CD14-positive monocyte (primary cell): ENCODE measurements at regions of chr7 and their contacts with region 1.

Region 1: DNA sequence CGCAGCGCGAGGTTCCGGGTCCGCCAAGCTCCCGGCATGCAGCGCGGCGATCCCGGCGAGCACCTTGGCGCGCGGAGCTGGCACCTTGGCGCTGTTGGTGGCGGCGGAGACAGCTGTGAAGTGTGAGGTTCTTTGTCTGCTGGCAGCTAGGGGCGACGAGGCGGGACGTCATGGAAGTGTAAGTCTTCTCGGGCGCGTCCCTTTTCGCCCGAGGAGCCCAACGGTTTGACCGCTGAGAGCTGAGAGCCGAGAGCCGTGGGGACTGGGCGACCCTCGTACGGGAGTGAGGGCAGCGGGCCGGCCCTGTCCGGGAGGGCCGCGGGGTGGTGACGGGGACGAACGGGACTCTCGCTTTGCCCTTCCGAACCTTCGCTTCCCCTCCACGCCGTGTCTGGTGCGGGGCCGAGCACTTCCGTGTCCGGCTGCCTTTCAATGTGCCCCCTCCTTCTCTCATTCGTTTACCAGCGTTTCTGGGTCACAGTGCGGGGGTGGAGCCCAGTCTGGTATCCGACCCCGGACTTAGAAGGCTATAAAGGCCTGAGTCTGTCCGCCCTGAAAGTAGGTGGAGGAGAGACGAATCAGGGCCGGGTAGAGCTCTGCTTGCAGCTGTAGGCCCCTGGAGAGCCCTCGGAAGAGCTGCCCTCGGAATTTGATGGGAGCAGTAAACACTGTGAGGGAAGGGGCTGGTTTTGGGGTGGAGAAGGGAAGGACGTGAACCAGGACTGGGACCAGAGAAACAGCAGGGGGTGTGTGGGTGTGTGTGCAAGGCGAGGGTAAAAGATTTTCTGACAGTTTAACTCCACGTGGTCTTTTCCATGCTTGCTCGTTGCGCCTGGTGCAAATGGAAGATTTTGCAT is at the start of gene CRCP:
- DNase-seq: peak; percentile 59 to 72 (median 70)
- H3K4me3 ChIP-seq: peak within 1 kb of the TSS; percentile 65 to 85 (median 80)
- H3K4me3 Mint-ChIP-seq: peak within 1 kb of the TSS; percentile 98 to 99
- H3K27ac ChIP-seq: peak within 1 kb of the TSS; percentile 92 to 96
- H3K27ac Mint-ChIP-seq: peak within 1 kb of the TSS; percentile 97 to 99 (median 98)
- H3K4me1 ChIP-seq: peaks cover 13 to 22% of the 10 kb centered on the region in 2 donors
- H3K4me1 Mint-ChIP-seq: peaks cover 35% of the 10 kb centered on the region
- H3K27me3 ChIP-seq: no peaks in the 10 kb centered on the region
- H3K27me3 Mint-ChIP-seq: peaks cover 0 to 3% (median 2%) of the 10 kb centered on the region in 3 donors
- CTCF ChIP-seq: no peak
- polyA plus RNA-seq, gene CRCP: 14.0 to 19.9 (median 15.5) TPM

Region 2: DNA sequence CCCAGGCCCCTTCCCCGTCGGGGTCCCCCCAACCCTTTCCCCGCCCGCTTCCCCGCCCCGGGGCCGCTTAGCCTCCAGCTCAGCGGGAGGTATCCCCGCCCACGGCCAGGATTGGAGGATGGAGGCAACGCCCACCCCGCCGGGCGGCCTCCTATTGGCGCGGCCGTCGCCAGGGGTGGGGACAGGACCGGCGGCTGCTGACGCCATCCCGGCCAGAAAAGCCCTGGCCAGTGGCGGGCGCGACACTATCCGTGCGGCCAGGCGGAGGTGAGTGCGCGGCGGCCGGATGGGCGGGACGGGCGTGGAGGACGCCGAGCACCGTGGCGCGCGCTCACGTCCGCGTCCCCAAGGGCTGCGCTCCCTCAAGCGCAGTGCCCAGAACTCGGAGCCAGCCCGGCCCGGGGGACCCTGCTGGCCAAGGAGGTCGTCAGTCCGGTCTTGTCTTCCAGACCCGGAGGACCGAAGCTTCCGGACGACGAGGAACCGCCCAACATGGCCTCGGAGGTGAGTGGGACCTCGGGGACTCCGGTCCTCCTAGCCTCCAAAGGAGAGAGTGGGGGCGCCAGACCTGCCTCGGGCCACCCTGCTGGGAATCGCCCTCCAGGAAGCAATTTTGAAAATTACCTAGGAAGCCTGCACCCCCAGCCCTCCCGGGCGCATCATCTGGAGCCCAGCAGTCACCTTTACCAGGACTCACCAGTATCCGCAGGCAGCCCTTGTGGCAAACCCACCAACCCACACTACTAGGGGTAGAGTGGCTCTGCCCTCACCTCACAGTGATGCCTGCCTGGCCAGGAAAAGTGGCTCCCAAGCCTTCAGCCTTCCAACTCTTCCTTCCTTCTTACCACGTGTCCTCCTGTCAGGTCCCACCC is 39.2 kb before region 1 on chr7 and contains the start of gene ASL:
- intact Hi-C with region 1: loop called (anchors 2 to 5 kb)
- DNase-seq: peak; percentile 89 to 92 (median 89)
- H3K4me3 ChIP-seq: peak within 1 kb of the TSS; percentile 83 to 95 (median 95)
- H3K4me3 Mint-ChIP-seq: peak within 1 kb of the TSS; percentile 81 to 90
- H3K27ac ChIP-seq: peak within 1 kb of the TSS; percentile 50 to 94
- H3K27ac Mint-ChIP-seq: peak within 1 kb of the TSS; percentile 69 to 92 (median 86)
- H3K4me1 ChIP-seq: peaks cover 17 to 19% of the 10 kb centered on the region in 2 donors
- H3K4me1 Mint-ChIP-seq: peaks cover 17% of the 10 kb centered on the region
- H3K27me3 ChIP-seq: no peaks in the 10 kb centered on the region
- H3K27me3 Mint-ChIP-seq: peaks cover 1 to 8% (median 4%) of the 10 kb centered on the region in 3 donors
- CTCF ChIP-seq: no peak
- polyA plus RNA-seq, gene ASL: 29.7 to 51.6 (median 35.9) TPM